Tibial artery (tissue), 4 donors: ENCODE measurements at regions of chr7 and their contacts with region 1.

Region 1: GRCh38 chr7:64672414-64672813 is 6.5 kb downstream of the ZNF107 start:
- DNase-seq: no peak
- H3K4me3 ChIP-seq: no peak overlapping the region
- H3K27ac ChIP-seq: no peak overlapping the region
- H3K4me1 ChIP-seq: peaks cover 0 to 10% (median 4%) of the 10 kb centered on the region in 4 donors
- H3K27me3 ChIP-seq: no peaks in the 10 kb centered on the region
- CTCF ChIP-seq: no peak

Region 2: DNA sequence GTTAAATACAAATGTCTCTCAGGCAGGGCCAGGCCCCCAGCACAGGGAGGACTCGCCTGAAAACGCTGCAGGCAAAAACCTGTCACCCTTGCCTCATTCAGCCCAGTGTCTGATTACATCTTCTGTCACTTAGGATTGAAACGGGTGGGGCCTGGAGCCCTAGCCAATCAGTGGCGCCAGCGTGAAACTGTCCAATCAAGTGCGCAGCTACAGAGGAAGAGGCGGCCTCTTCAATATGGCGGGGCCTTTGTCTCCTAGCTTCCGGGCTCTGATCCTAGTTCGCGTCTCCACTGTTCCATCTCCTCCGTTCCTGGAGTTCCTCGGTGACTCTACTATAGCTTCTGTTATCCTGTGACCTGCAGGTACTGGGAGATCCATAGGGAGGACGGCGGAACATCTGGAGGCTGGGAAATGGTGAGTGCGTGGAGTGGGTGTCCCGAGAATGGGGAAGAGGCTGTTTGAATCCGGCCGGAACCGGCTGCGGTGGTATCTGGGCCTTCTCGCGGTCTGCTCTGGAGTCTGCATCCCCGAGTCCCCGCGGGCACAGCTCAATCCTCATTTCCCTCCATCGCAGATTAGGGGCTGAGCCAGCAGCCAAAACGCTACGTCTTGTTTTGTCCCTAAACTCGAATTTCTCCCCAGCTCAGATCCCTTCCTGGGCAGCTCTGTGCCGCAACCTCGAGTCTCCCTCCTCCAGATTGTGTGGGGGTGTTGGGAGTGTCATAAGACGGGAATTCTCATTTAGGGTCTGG is 358.5 kb before region 1 on chr7 and contains the start of gene ZNF736:
- intact Hi-C with region 1: loop called (anchors 5 kb)
- DNase-seq: peak; percentile 93 to 94
- H3K4me3 ChIP-seq: peak within 1 kb of the TSS; percentile 65 to 73
- H3K27ac ChIP-seq: peak within 1 kb of the TSS; percentile 65 to 74
- H3K4me1 ChIP-seq: peaks cover 0 to 17% (median 12%) of the 10 kb centered on the region in 4 donors
- H3K27me3 ChIP-seq: no peaks in the 10 kb centered on the region
- CTCF ChIP-seq: no peak

Region 3: GRCh38 chr7:64602518-64602917 is 69.9 kb before region 1 on chr7:
- intact Hi-C with region 1: no loop called
- DNase-seq: no peak
- H3K4me3 ChIP-seq: no peak overlapping the region
- H3K27ac ChIP-seq: no peak overlapping the region
- H3K4me1 ChIP-seq: no peaks in the 10 kb centered on the region
- H3K27me3 ChIP-seq: no peaks in the 10 kb centered on the region
- CTCF ChIP-seq: no peak

Region 4: DNA sequence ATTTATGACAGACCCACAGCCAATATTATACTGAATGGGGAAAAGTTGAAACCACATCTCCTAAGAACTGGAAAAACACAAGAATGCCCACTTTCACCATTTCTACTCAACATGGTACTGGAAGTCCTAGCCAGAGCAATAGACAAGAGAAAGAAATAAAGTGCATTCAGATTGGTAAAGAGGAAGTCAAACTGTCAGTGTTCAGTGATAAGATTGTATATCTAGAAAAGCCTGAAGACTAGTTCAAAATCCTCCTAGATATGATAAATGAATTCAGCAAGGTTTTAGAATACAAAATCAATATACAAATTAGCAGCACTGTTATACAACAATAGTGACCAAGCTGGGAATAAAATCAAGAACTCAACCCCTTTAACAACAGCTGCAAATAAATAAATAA is 114.9 kb after region 1 on chr7:
- intact Hi-C with region 1: no loop called
- DNase-seq: no peak
- H3K4me3 ChIP-seq: no peak overlapping the region
- H3K27ac ChIP-seq: no peak overlapping the region
- H3K4me1 ChIP-seq: no peaks in the 10 kb centered on the region
- H3K27me3 ChIP-seq: no peaks in the 10 kb centered on the region
- CTCF ChIP-seq: no peak

Region 5: GRCh38 chr7:65216459-65216858 is 544.0 kb after region 1 on chr7:
- intact Hi-C with region 1: no loop called
- DNase-seq: no peak
- H3K4me3 ChIP-seq: no peak overlapping the region
- H3K27ac ChIP-seq: no peak overlapping the region
- H3K4me1 ChIP-seq: no peaks in the 10 kb centered on the region
- H3K27me3 ChIP-seq: no peaks in the 10 kb centered on the region
- CTCF ChIP-seq: peak in 1 of 2 experiments; percentile 24